ENCODE measurements at regions of chr12 and their contacts with region 1.

Region 1: DNA sequence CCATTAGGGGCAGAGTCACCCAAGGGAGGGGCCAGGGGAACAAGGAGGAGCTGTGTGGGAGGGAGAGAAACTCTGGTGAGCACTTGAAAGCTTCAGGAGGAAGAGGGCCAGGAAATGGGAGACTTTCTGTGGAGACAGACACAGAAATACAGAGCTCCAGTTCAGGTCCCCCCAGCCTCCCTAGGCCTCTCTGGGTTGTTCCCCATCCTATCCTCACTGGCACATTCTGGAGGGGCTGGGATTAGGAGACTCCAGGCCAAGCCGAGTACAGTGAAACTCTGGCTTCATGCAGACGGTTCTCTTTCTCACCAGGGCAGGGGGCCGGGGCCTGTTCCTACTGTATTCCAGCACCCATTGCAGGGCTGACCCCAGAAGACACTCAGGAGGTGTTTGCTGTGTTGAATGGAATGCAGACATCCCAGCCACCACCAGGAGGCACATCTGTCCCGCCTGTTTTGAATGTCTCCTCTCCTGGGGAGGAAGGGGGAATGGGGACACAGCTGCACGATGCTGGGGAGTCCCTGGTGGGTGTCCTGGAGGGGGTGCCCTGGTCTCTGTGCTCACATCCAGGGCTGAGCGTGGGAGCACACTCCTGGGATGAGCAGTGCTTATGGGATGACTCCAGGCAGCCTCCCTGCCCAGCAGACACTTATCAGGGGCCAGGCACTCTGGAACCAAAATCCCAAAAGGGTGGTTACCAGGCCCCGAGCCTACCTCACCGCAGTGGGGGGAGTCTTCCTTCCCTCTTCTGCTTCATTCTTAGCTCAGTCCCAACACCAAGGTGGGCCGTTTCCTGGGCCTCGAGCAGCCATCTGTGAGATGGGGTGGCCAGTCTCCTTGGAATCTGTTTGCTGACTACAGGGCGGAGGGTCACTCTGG is 5.5 kb upstream of the KRT84 start:
- DNase-seq: peak; percentile 70
- ATAC-seq: peak; percentile 57
- H3K4me3 Mint-ChIP-seq: no peak overlapping the region
- H3K27ac Mint-ChIP-seq: no peak overlapping the region
- H3K4me1 Mint-ChIP-seq: peaks cover 4% of the 10 kb centered on the region; the same call in 1 of the 2 replicates
- H3K27me3 Mint-ChIP-seq: peaks cover 4% of the 10 kb centered on the region; the same call in 1 of the 2 replicates
- CTCF ChIP-seq: 0 out of 2 replicates have a peak, but pooled peaks have one; percentile 38

Region 2: GRCh38 chr12:52380271-52380694 is 10.7 kb before region 1 on chr12:
- CTCF ChIA-PET with region 1: interaction called, 38 read pairs
- POLR2A ChIA-PET with region 1: no interaction called
- DNase-seq: peak; percentile 66
- ATAC-seq: peak; percentile 78
- H3K4me3 Mint-ChIP-seq: no peak overlapping the region
- H3K27ac Mint-ChIP-seq: no peak overlapping the region
- H3K4me1 Mint-ChIP-seq: no peaks in the 10 kb centered on the region
- H3K27me3 Mint-ChIP-seq: no peaks in the 10 kb centered on the region; the same call in 1 of the 2 replicates
- CTCF ChIP-seq: no peak

Region 3: GRCh38 chr12:52442600-52443061 is 51.7 kb after region 1 on chr12:
- CTCF ChIA-PET with region 1: interaction called, 24 read pairs
- POLR2A ChIA-PET with region 1: no interaction called
- DNase-seq: peak; percentile 60
- ATAC-seq: peak; percentile 96
- H3K4me3 Mint-ChIP-seq: no peak overlapping the region; the same call in 1 of the 2 replicates
- H3K27ac Mint-ChIP-seq: peak overlapping the region; percentile 43
- H3K4me1 Mint-ChIP-seq: peaks cover 22% of the 10 kb centered on the region
- H3K27me3 Mint-ChIP-seq: no peaks in the 10 kb centered on the region
- CTCF ChIP-seq: no peak

Region 4: GRCh38 chr12:52515927-52516831 is 125.2 kb after region 1 on chr12:
- CTCF ChIA-PET with region 1: interaction called, 24 read pairs
- POLR2A ChIA-PET with region 1: no interaction called
- DNase-seq: no peak
- ATAC-seq: no peak
- H3K4me3 Mint-ChIP-seq: no peak overlapping the region
- H3K27ac Mint-ChIP-seq: no peak overlapping the region
- H3K4me1 Mint-ChIP-seq: no peaks in the 10 kb centered on the region
- H3K27me3 Mint-ChIP-seq: no peaks in the 10 kb centered on the region; the same call in 1 of the 2 replicates
- CTCF ChIP-seq: no peak

Region 5: DNA sequence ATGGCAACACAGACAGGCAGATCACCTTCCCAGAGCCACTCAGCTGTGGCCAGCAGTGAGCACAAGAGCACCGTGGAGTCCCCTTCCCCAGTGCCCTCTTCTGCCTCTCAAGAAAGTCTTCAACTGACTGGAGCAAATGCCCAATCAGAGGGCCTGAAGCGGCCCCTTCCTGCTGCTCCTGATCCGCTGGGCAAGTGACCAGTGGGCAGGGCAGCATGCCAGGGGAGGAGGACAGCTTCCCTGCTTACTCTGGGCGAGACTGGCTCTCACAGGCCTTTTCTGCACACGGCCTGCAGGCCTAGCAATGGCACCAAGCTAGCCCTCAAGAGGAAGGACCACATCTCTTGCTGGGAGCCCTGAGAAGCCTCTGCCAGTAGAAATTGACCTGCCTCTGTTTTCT is 161.1 kb after region 1 on chr12:
- CTCF ChIA-PET with region 1: interaction called, 24 read pairs
- POLR2A ChIA-PET with region 1: no interaction called
- DNase-seq: no peak
- ATAC-seq: no peak
- H3K4me3 Mint-ChIP-seq: no peak overlapping the region
- H3K27ac Mint-ChIP-seq: no peak overlapping the region
- H3K4me1 Mint-ChIP-seq: no peaks in the 10 kb centered on the region
- H3K27me3 Mint-ChIP-seq: peaks cover 2% of the 10 kb centered on the region; the same call in 1 of the 2 replicates
- CTCF ChIP-seq: no peak

Region 6: DNA sequence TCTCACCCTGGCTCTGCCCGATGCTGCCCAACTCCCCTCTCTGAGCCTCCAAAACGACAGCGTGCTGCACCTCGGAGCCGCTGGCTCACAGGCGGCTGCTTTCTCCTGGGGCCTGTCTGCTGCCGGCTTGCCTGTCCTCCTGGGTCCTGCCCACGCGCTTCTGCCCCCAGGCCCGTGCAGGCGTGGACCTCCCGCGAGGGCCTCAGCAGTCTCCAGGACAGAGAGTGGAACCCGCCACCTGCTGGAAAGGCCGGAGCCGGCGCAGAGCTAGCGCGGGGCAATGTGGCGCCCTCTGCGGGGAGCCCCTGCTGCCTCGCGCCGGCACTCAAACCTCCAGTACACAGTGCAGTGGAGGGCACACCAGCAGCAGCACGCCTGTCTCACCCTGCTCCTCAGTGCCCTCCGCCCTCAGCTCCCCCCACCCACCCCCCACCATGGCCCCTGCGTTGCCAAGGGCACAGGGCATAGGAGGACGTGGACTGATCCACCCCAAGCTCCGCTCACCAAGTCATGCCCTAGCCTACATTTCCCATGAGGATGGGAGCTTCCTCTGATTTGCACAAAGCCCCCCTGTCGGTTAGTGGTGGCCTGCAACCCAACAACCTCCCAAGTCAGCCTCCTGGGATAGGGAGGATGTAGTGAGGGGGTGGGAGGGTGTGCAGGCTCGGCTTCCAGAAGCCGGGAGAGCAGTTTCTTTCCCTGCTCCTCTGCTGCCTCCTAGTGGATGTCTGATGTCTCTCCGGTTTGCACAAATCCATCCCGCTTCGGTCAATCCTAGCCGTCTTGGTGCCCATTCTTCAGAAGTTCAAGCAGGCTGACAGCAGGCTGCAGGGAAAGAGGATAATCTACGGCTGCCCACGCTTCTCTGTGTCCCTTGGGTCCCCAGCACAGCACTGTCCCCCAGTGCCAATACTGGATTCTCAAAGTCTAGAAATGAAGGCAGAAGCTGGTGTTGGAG is 488.7 kb after region 1 on chr12:
- CTCF ChIA-PET with region 1: interaction called, 47 read pairs
- POLR2A ChIA-PET with region 1: no interaction called
- DNase-seq: peak; percentile 86
- ATAC-seq: peak; percentile 80
- H3K4me3 Mint-ChIP-seq: peak overlapping the region; percentile 74
- H3K27ac Mint-ChIP-seq: 0 out of 2 replicates have a peak overlapping the region, but pooled peaks have one; percentile 60
- H3K4me1 Mint-ChIP-seq: peaks cover 14% of the 10 kb centered on the region
- H3K27me3 Mint-ChIP-seq: peaks cover 12% of the 10 kb centered on the region
- CTCF ChIP-seq: peak; percentile 86

Measured in WTC11 (cell line).